GM12878 (cell line): ENCODE measurements at regions of chr11 and their contacts with region 1.

Region 1: GRCh38 chr11:85694386-85694980 is 8.5 kb upstream of the CCDC89 start:
- DNase-seq: no peak
- ATAC-seq: peak; percentile 67; the same call in 2 of the 3 replicates
- H3K4me3 ChIP-seq: no peak overlapping the region
- H3K27ac ChIP-seq: no peak overlapping the region
- H3K4me1 ChIP-seq: peaks cover under 1% of the 10 kb centered on the region
- H3K27me3 ChIP-seq: no peaks in the 10 kb centered on the region; a peak in 1 of 4 replicates
- CTCF ChIP-seq: peak in 2 of 3 experiments; percentile 38 to 44; a peak in 3 of 6 replicates
- EP300 ChIP-seq: no peak
- POLR2A ChIP-seq: no peak
- RAD21 ChIP-seq: peak; percentile 34; the same call in 1 of the 2 replicates

Region 2: GRCh38 chr11:85682330-85683305 is 11.9 kb before region 1 on chr11:
- CTCF ChIA-PET with region 1: interaction called, 27 read pairs
- POLR2A ChIA-PET with region 1: interaction called, 5 read pairs
- RAD21 ChIA-PET with region 1: interaction called, 4 read pairs
- SMC1A ChIA-PET with region 1: interaction called, 6 read pairs
- in situ Hi-C with region 1: no loop called
- intact Hi-C with region 1: no loop called
- DNase-seq: no peak
- ATAC-seq: peak; percentile 95
- H3K4me3 ChIP-seq: peak overlapping the region; percentile 95
- H3K27ac ChIP-seq: peak overlapping the region; percentile 47
- H3K4me1 ChIP-seq: peaks cover 5% of the 10 kb centered on the region; the same call in 1 of the 2 replicates
- H3K27me3 ChIP-seq: 0 out of 4 replicates have a peak, but pooled peaks cover 0 to 3% of the 10 kb centered on the region in 2 experiments
- CTCF ChIP-seq: no peak
- EP300 ChIP-seq: no peak
- POLR2A ChIP-seq: peak; percentile 72
- RAD21 ChIP-seq: no peak

Region 3: DNA sequence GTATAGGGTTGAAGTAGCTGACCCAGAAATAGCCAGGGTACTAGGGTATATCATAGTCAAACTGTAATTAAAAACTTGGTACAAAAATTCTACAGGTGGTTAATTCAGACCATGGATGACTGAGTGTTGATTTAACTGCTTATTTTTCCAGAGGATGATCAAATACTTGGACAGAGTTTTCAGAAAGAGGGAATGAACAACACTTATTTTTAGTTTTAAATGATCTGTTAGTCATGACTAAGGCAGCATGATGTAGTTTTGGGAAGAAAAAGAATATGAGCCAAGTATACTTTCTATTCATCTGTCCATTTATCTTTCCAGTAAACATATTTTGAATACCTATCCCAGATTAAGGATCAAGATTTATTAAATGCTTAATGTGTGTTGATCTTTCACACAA is 11.3 kb after region 1 on chr11:
- CTCF ChIA-PET with region 1: no interaction called
- POLR2A ChIA-PET with region 1: no interaction called
- RAD21 ChIA-PET with region 1: no interaction called
- SMC1A ChIA-PET with region 1: no interaction called
- in situ Hi-C with region 1: no loop called
- intact Hi-C with region 1: no loop called
- DNase-seq: no peak
- ATAC-seq: no peak
- H3K4me3 ChIP-seq: no peak overlapping the region
- H3K27ac ChIP-seq: no peak overlapping the region
- H3K4me1 ChIP-seq: no peaks in the 10 kb centered on the region
- H3K27me3 ChIP-seq: no peaks in the 10 kb centered on the region; a peak in 1 of 4 replicates
- CTCF ChIP-seq: no peak
- EP300 ChIP-seq: no peak
- POLR2A ChIP-seq: no peak
- RAD21 ChIP-seq: no peak

Region 4: GRCh38 chr11:85826116-85826855 is 131.8 kb after region 1 on chr11:
- CTCF ChIA-PET with region 1: interaction called, 4 read pairs
- POLR2A ChIA-PET with region 1: no interaction called
- RAD21 ChIA-PET with region 1: no interaction called
- SMC1A ChIA-PET with region 1: interaction called, 4 read pairs
- in situ Hi-C with region 1: no loop called
- intact Hi-C with region 1: loop called (anchors 5 kb)
- DNase-seq: no peak
- ATAC-seq: peak; percentile 85
- H3K4me3 ChIP-seq: no peak overlapping the region
- H3K27ac ChIP-seq: no peak overlapping the region
- H3K4me1 ChIP-seq: no peaks in the 10 kb centered on the region
- H3K27me3 ChIP-seq: no peaks in the 10 kb centered on the region; a peak in 1 of 4 replicates
- CTCF ChIP-seq: peak; percentile 33 to 60 (median 33); a peak in 5 of 6 replicates
- EP300 ChIP-seq: no peak
- POLR2A ChIP-seq: no peak
- RAD21 ChIP-seq: peak; percentile 27; the same call in 1 of the 2 replicates